Common myeloid progenitor, CD34-positive (primary cell): ENCODE measurements at regions of chr17 and their contacts with region 1.

Region 1: GRCh38 chr17:50087246-50087911 is 7.8 kb upstream of the PDK2 start:
- DNase-seq: peak; percentile 51 to 73 (median 72)
- H3K4me3 ChIP-seq: no peak overlapping the region
- H3K27ac ChIP-seq: no peak overlapping the region
- H3K4me1 ChIP-seq: no peaks in the 10 kb centered on the region
- H3K27me3 ChIP-seq: no peaks in the 10 kb centered on the region

Region 2: DNA sequence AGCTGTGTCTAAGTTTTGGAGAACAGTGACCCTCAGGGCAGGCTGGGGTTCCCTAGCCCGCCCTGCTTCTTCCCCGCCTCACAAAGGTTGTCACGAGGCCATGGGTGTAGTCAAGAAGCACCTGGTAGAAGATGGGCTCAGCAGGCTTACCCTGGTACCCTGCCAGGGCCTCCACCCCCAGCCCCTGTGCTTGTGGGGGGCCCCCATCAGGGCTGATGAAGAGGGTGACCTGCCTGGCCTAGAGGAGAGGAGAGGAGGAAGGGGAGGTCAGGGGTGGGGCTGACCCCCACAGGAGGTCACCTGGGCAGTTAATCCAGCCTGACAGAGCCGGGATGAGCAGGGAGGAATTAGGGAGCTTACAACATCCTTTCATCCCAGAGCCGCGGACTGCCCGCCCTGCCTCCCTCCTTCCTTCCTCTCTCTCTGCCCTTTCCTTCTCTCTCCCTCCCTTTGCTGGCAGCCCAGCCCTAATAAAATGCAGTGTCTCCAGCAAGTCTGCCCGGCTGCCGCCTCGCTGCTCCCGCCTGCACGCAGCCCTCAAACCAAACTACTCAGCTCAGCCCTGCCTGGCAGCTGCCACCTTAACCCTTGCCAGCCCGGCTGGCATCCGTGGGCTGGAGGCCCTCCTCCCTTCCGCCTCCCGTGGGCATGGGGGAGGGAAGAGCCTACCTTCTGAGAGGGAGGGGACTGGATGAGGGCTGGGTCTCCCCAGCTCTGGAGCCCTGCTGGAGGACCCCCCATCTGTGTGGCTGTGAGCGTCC is 99.5 kb before region 1 on chr17:
- CTCF ChIA-PET with region 1: no interaction called
- POLR2A ChIA-PET with region 1: no interaction called
- DNase-seq: peak in 1 of 3 donors; percentile 52
- H3K4me3 ChIP-seq: no peak overlapping the region
- H3K27ac ChIP-seq: no peak overlapping the region
- H3K4me1 ChIP-seq: peaks cover 0 to 21% (median 13%) of the 10 kb centered on the region in 4 experiments
- H3K27me3 ChIP-seq: peaks cover 0 to 79% (median 28%) of the 10 kb centered on the region in 5 experiments

Region 3: DNA sequence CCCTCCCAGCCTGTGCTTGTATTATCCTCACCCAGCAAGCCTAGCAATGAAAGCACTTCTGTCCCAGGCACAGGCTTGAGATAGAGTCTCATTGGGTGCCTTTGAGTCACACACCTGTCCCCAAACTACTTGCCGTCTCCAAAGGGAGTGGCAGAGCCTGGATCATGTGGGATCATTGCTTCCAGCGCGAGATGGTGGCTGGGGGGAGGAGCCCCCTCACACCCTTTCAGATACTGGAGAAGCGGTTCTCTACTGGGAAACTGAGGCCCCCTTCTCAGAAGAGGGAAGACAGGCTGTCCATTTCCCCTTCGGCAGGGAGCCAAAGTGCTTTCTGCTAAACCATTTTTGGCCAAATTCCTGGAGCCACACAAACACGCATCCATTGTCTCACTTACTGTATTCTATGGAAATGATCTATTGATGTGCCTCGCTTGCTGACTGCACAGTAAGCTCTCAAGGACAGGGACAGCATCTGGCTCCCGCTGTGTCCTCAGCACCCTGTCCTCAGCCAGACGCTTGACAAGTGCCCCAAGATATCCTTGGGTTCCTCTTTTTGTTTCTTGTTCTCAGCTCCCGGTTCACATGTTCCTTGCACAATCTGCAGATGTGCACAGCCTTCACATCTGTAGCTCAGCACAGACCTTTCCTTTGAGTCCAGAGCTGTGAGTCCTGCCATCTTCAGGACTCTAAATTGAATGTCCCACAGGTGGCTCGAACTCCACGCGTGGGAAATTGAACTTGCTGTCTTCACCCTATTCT is 66.4 kb before region 1 on chr17:
- CTCF ChIA-PET with region 1: interaction called, 30 read pairs
- POLR2A ChIA-PET with region 1: no interaction called
- DNase-seq: peak in 2 of 3 donors; percentile 49 to 56
- H3K4me3 ChIP-seq: no peak overlapping the region
- H3K27ac ChIP-seq: no peak overlapping the region
- H3K4me1 ChIP-seq: peaks cover 0 to 6% (median 5%) of the 10 kb centered on the region in 4 experiments
- H3K27me3 ChIP-seq: peaks cover 0 to 1% (median 0%) of the 10 kb centered on the region in 5 experiments